ENCODE measurements at regions of chr7 and their contacts with region 1.

Region 1: GRCh38 chr7:30915005-30915601 is 3.5 kb downstream of the AQP1 start:
- DNase-seq: peak; percentile 45
- ATAC-seq: peak; percentile 21

Region 2: GRCh38 chr7:30750683-30751650 is 164.1 kb before region 1 on chr7:
- intact Hi-C with region 1: loop called (anchors 5 kb)
- DNase-seq: peak; percentile 88
- ATAC-seq: peak; percentile 75

Region 3: DNA sequence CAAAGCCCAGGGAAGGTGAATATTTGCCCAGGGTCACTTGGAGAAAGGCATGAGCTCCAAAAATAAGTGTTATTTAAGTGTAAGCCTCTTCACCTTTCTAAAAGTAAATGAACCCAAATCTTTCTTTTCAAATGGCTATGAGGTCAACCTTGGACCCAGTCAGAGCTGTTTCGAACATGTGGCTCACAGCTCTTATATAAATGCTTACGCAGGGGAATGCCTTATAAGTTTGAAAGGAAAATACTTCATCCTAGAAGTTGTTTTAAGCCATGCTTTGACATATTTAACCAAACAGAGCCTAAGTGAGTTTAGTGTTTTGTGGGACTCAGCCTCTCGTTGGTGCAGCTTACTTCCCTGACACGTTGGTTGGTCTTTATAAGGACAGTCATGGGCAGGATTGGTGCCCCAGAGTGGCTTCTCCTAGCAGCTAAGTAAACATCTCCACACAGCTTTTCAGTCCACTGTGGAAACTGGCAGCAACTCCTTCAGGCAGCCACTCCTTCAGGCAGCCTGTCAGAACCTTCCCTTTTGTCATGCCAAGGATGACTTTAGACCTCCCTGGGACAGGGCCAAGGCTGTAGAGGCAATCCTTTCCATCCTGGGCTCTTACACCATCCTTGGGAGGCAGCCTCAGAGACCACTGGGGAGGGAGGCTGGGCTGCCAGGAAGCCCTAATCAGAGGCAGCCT is 100.3 kb before region 1 on chr7:
- intact Hi-C with region 1: loop called (anchors 5 kb)
- DNase-seq: peak; percentile 72
- ATAC-seq: peak; percentile 75

Measured in Right ventricle myocardium inferior (tissue), 1 donor.